Activated B cell treated with CpG ODN at 0.5 μM for 24 hours (primary cell): ENCODE measurements at regions of chr3 and their contacts with region 1.

Region 1: GRCh38 chr3:46845791-46846623 is 17.2 kb downstream of the MYL3 start:
- DNase-seq: peak; percentile 82
- ATAC-seq: peak; percentile 96
- H3K4me3 Mint-ChIP-seq: peak overlapping the region; percentile 87
- H3K27ac Mint-ChIP-seq: peak overlapping the region; percentile 83
- H3K4me1 Mint-ChIP-seq: peaks cover 6% of the 10 kb centered on the region
- H3K27me3 Mint-ChIP-seq: no peaks in the 10 kb centered on the region
- CTCF ChIP-seq: no peak

Region 2: GRCh38 chr3:46829699-46830208 is 16.3 kb before region 1 on chr3:
- CTCF ChIA-PET with region 1: no interaction called
- POLR2A ChIA-PET with region 1: no interaction called
- intact Hi-C with region 1: no loop called
- DNase-seq: no peak
- ATAC-seq: no peak
- H3K4me3 Mint-ChIP-seq: no peak overlapping the region
- H3K27ac Mint-ChIP-seq: no peak overlapping the region
- H3K4me1 Mint-ChIP-seq: no peaks in the 10 kb centered on the region
- H3K27me3 Mint-ChIP-seq: no peaks in the 10 kb centered on the region
- CTCF ChIP-seq: no peak

Region 3: GRCh38 chr3:46895204-46895660 is 49.2 kb after region 1 on chr3:
- CTCF ChIA-PET with region 1: interaction called, 6 read pairs
- POLR2A ChIA-PET with region 1: no interaction called
- intact Hi-C with region 1: loop called (anchors 1 kb)
- DNase-seq: peak; percentile 76
- ATAC-seq: peak; percentile 77
- H3K4me3 Mint-ChIP-seq: no peak overlapping the region
- H3K27ac Mint-ChIP-seq: no peak overlapping the region
- H3K4me1 Mint-ChIP-seq: peaks cover 24% of the 10 kb centered on the region
- H3K27me3 Mint-ChIP-seq: peaks cover 37% of the 10 kb centered on the region
- CTCF ChIP-seq: no peak